Lower leg skin (tissue), 4 donors: ENCODE measurements at regions of chr5 and their contacts with region 1.

Region 1: DNA sequence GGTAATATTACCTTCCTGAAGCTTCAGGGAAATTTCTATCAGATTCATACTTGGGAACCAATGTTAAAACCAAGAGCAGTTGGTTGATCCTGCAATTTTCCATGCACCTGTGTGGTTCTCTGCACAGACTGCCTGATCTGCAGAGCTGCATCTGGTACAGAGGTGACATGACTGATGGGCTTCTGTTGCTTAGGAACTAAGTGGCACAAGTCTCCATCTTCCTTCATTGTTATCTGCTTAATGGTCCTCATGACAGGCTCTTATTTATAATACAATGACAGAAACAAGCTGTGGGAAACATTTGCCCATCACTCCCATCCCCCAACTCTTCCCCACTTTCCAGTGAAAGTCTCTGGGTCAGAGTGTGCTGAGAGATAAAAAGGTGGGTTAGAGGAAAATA is 799.1 kb downstream of the TAF11L14 start:
- DNase-seq: no peak
- H3K4me3 ChIP-seq: no peak overlapping the region
- CTCF ChIP-seq: no peak
- POLR2A ChIP-seq: no peak

Region 2: DNA sequence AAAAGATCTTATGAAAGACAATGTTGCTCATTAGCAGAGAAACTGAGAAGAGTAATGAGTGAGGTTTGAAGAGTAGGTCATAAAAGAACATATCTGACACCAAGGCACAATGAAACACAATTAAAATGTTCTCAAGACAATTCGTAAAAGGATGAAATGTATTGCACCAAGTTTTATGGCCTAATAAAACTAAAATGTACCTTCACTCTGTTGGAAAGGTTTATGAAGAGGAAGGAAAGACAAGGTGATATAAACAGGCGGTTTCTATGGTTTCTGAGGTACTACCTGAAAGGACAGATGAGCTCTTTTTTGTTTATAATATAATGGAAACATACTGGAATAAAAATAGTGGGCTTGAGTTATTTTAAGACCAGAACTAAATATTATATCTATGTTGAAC is 22.2 kb after region 1 on chr5:
- intact Hi-C with region 1: loop called (anchors 1 kb)
- DNase-seq: no peak
- H3K4me3 ChIP-seq: no peak overlapping the region
- CTCF ChIP-seq: no peak
- POLR2A ChIP-seq: no peak